RWPE1 (cell line): ENCODE measurements at regions of chr5 and their contacts with region 1.

Region 1: GRCh38 chr5:147956064-147956841 is 49.9 kb upstream of the C5orf46 start:
- DNase-seq: peak; percentile 51
- H3K27ac ChIP-seq: no peak overlapping the region
- CTCF ChIP-seq: no peak

Region 2: DNA sequence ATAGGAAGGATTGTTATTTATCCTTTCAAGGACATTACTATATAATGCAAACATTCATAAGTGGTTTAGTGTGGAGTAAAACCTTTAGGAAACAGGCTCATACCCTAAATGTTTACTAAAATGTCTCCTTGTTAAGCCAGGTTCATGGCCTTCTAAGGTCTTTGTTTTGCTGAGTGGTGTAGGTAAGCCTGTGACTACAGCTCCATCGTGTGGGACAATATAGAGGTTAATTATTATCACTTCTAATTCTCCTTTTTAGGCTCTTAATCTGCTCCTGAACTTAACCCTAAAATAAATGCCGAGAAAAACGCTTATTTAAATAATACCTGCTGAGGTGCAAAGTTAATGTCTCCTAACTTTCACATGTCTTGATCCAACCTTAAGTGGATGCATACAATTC is 151.4 kb after region 1 on chr5:
- CTCF ChIA-PET with region 1: interaction called, 13 read pairs
- POLR2A ChIA-PET with region 1: no interaction called
- DNase-seq: peak; percentile 49
- H3K27ac ChIP-seq: no peak overlapping the region
- CTCF ChIP-seq: peak; percentile 24